Transverse colon (tissue), 4 donors: ENCODE measurements at regions of chr2 and their contacts with region 1.

Region 1: GRCh38 chr2:220998156-220998555 is 573.9 kb downstream of the EPHA4 start:
- DNase-seq: no peak
- H3K4me3 ChIP-seq: no peak overlapping the region
- H3K27ac ChIP-seq: no peak overlapping the region
- H3K4me1 ChIP-seq: no peaks in the 10 kb centered on the region
- H3K27me3 ChIP-seq: no peaks in the 10 kb centered on the region
- CTCF ChIP-seq: no peak
- EP300 ChIP-seq: no peak
- POLR2A ChIP-seq: no peak

Region 2: DNA sequence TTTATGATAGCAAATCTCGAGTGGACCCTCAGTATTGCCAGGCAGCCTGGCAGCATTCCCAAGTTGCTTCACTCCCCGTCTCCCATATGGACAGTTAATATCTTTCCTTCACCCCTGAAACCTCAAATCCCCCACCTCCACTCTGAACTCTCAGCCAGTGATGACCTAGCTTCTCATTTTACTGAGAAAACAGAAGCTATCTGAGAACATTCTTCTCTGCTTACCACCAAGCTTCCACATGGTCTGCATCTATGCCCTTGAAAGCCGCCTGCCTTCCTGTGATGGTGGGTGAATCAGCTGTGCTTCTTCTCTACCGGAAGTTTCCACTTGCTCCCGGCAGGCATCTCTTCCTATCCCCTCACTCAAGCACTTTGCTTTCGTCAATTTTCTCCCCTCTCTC is 44.8 kb after region 1 on chr2:
- in situ Hi-C with region 1: no loop called
- intact Hi-C with region 1: loop called (anchors 1 kb)
- DNase-seq: no peak
- H3K4me3 ChIP-seq: no peak overlapping the region
- H3K27ac ChIP-seq: no peak overlapping the region
- H3K4me1 ChIP-seq: no peaks in the 10 kb centered on the region
- H3K27me3 ChIP-seq: no peaks in the 10 kb centered on the region
- CTCF ChIP-seq: no peak
- EP300 ChIP-seq: no peak
- POLR2A ChIP-seq: no peak